Colonic mucosa (tissue), 4 donors: ENCODE measurements at regions of chr15 and their contacts with region 1.

Region 1: GRCh38 chr15:90648137-90649070 is 68.7 kb upstream of the BLM start:
- DNase-seq: peak; percentile 75
- H3K4me3 ChIP-seq: peak overlapping the region; percentile 11
- H3K27ac ChIP-seq: peak overlapping the region; percentile 62
- H3K4me1 ChIP-seq: peaks cover 6% of the 10 kb centered on the region
- H3K27me3 ChIP-seq: no peaks in the 10 kb centered on the region
- CTCF ChIP-seq: peak; percentile 86

Region 2: GRCh38 chr15:90691982-90692773 is 43.8 kb after region 1 on chr15:
- intact Hi-C with region 1: loop called (anchors 5 kb)
- DNase-seq: no peak
- H3K4me3 ChIP-seq: no peak overlapping the region
- H3K27ac ChIP-seq: no peak overlapping the region
- H3K4me1 ChIP-seq: no peaks in the 10 kb centered on the region
- H3K27me3 ChIP-seq: no peaks in the 10 kb centered on the region
- CTCF ChIP-seq: no peak